Right cardiac atrium (tissue), 5 donors: ENCODE measurements at regions of chr18 and their contacts with region 1.

Region 1: DNA sequence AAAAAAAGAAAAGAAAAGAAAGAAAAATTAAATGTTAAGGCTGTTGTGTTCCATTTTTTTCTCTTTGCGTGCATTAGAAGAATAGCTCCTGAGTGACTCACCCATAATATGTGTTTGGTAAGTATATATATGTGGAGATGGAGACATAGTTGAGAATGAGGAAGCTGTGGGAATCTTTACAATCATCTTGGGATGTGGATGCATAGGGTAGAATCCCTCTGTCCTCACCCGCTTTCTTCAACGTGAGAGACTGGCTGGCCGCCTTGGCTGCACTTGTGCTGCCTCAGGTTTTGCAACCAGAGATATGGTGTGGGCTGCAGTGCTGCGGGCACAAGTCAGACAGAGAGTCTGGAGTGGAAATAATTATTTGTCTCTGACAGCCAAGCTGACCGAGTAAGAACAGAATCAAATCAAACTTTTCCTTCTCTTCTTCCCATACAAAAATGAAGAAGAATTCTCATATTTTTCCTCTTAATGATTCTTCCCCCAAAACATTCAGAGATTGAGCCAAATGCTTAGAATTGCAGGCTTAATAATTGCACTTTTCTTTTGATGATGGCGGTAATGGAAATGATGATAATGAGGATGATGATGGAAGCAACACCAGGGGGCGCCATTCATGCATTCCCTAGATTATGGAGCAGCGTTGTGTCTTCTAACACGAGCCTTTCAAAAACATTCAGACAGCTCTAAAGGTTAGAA is 48.5 kb downstream of the SERPINB7 start:
- DNase-seq: peak; percentile 25 to 76 (median 48)
- ATAC-seq: no peak
- H3K4me3 ChIP-seq: no peak overlapping the region
- H3K27ac ChIP-seq: no peak overlapping the region
- H3K4me1 ChIP-seq: no peaks in the 10 kb centered on the region
- H3K27me3 ChIP-seq: no peaks in the 10 kb centered on the region

Region 2: DNA sequence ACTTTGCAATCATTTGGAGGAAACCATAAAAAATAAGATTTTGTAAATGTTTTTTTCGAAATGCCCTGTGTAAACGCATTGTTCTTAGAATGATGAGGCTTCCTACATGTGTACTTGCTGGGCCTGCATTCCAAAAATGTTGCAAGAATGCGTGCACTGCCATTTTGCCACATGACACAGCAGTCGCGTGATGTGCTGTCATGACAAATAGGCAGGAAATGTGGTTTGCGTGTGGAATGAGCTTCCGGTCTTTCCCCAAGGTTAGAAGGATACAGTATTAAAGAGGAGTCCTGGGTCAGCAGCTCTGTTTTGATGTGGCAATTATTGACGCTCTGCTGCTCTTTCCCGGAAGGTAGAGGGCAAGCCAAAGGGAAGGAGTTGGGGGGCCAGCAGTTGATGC is 45.7 kb after region 1 on chr18:
- intact Hi-C with region 1: no loop called
- DNase-seq: no peak
- ATAC-seq: no peak
- H3K4me3 ChIP-seq: no peak overlapping the region
- H3K27ac ChIP-seq: no peak overlapping the region
- H3K4me1 ChIP-seq: no peaks in the 10 kb centered on the region
- H3K27me3 ChIP-seq: no peaks in the 10 kb centered on the region

Region 3: DNA sequence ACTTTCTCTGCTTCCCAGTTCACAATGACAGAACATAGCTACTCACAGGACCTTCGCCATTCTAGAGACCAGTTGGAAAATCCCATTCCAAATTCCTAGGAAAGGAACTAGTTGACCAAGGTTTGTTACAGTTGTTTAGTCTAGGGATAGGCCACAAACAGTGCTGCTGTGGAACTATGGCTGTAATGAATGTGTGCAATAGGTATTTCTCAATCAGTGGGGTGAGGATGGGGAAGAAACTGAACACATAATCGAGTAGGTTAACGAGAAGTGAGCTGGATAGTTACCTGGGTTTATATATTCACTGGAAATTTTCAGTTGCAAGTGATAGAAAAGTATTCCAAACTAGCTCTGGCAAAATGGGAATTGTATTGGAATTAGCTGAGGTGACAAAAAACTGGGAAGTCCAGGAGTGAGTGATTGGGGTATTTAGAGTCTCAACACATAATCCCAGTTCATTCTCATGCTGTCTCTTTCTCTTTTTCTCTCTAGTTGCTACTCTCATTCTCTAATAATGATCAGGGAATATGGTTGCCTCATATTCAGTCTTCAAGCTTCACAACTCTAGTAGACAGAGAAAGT is 107.2 kb after region 1 on chr18:
- intact Hi-C with region 1: loop called in 3 of 4 experiments (anchors 5 to 10 kb)
- DNase-seq: no peak
- ATAC-seq: no peak
- H3K4me3 ChIP-seq: no peak overlapping the region
- H3K27ac ChIP-seq: no peak overlapping the region
- H3K4me1 ChIP-seq: no peaks in the 10 kb centered on the region
- H3K27me3 ChIP-seq: peaks cover 2% of the 10 kb centered on the region

Region 4: GRCh38 chr18:63936156-63936931 is 112.7 kb after region 1 on chr18:
- intact Hi-C with region 1: loop called in 3 of 4 experiments (anchors 5 to 10 kb)
- DNase-seq: peak; percentile 87 to 94 (median 92)
- ATAC-seq: peak; percentile 99
- H3K4me3 ChIP-seq: peak overlapping the region; percentile 34
- H3K27ac ChIP-seq: no peak overlapping the region
- H3K4me1 ChIP-seq: no peaks in the 10 kb centered on the region
- H3K27me3 ChIP-seq: no peaks in the 10 kb centered on the region

Region 5: GRCh38 chr18:64100116-64100922 is 276.6 kb after region 1 on chr18:
- intact Hi-C with region 1: no loop called
- DNase-seq: no peak
- ATAC-seq: no peak
- H3K4me3 ChIP-seq: no peak overlapping the region
- H3K27ac ChIP-seq: no peak overlapping the region
- H3K4me1 ChIP-seq: no peaks in the 10 kb centered on the region
- H3K27me3 ChIP-seq: no peaks in the 10 kb centered on the region